Ovary (tissue), 10 donors: ENCODE measurements at regions of chr11 and their contacts with region 1.

Region 1: GRCh38 chr11:121841487-121842191 is 274.4 kb downstream of the BLID start:
- DNase-seq: peak in 1 of 5 donors; percentile 21
- H3K4me3 ChIP-seq: no peak overlapping the region
- H3K27ac ChIP-seq: no peak overlapping the region
- H3K4me1 ChIP-seq: peaks cover 2% of the 10 kb centered on the region
- H3K27me3 ChIP-seq: no peaks in the 10 kb centered on the region
- CTCF ChIP-seq: no peak
- EP300 ChIP-seq: no peak
- POLR2A ChIP-seq: no peak

Region 2: DNA sequence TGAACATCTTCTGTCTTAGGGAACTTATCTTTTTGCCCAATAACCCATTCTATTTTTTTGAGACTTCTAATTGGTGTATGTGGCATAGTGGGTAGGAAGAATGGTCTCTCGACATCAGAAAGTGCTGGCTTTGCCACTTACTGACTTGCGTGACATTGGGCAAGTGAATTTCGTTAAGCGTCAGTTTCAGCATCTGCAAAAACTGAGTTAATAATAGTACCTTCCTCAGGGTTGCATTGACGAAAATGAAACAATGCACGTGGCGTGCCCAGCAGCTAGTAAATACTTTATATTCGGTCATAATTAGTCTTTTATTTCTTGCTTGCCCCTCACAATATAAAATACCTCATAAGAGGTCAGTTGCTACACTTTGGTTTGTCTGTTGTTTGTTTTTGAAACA is 1342.6 kb before region 1 on chr11:
- intact Hi-C with region 1: loop called in 1 of 4 experiments (anchors 5 kb)
- DNase-seq: no peak
- H3K4me3 ChIP-seq: no peak overlapping the region
- H3K27ac ChIP-seq: no peak overlapping the region
- H3K4me1 ChIP-seq: no peaks in the 10 kb centered on the region
- H3K27me3 ChIP-seq: no peaks in the 10 kb centered on the region
- CTCF ChIP-seq: no peak
- EP300 ChIP-seq: no peak
- POLR2A ChIP-seq: no peak

Region 3: DNA sequence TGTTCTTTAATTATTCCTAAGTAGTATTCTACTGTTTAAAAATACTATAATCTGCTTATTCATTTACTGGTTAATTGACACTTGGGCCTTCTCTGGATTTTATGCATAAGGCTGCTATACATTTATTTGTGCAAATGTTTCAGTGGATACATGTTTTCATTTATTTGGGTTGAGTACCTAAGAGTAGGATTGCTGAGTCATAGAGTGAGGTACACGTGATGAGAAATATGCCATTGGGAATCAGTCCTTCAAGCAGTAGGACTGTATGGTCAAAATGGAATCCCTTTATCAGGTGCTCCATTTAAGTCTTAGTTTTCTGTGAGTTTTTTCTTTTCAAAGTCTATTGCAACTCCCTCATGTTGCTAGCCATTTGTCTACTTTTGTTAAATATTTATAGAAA is 113.7 kb before region 1 on chr11:
- intact Hi-C with region 1: no loop called
- DNase-seq: no peak
- H3K4me3 ChIP-seq: no peak overlapping the region
- H3K27ac ChIP-seq: no peak overlapping the region
- H3K4me1 ChIP-seq: peaks cover 2% of the 10 kb centered on the region
- H3K27me3 ChIP-seq: no peaks in the 10 kb centered on the region
- CTCF ChIP-seq: no peak
- EP300 ChIP-seq: no peak
- POLR2A ChIP-seq: no peak